H1 (cell line): ENCODE measurements at regions of chr13 and their contacts with region 1.

Region 1: GRCh38 chr13:100721885-100722512 is 47.4 kb upstream of the TMTC4 start:
- DNase-seq: peak in 1 of 2 experiments; percentile 82
- H3K4me3 ChIP-seq: no peak overlapping the region
- H3K27ac ChIP-seq: no peak overlapping the region
- H3K4me1 ChIP-seq: no peaks in the 10 kb centered on the region
- H3K27me3 ChIP-seq: no peaks in the 10 kb centered on the region; a peak in 1 of 7 replicates
- CTCF ChIP-seq: peak; percentile 60 to 80 (median 63)
- EP300 ChIP-seq: no peak
- POLR2A ChIP-seq: no peak
- RAD21 ChIP-seq: peak; percentile 69 to 76

Region 2: GRCh38 chr13:100707818-100708740 is 13.9 kb before region 1 on chr13:
- CTCF ChIA-PET with region 1: interaction called, 52 read pairs
- POLR2A ChIA-PET with region 1: no interaction called
- DNase-seq: no peak
- H3K4me3 ChIP-seq: no peak overlapping the region
- H3K27ac ChIP-seq: no peak overlapping the region
- H3K4me1 ChIP-seq: no peaks in the 10 kb centered on the region
- H3K27me3 ChIP-seq: no peaks in the 10 kb centered on the region
- CTCF ChIP-seq: no peak
- EP300 ChIP-seq: no peak
- POLR2A ChIP-seq: no peak
- RAD21 ChIP-seq: no peak

Region 3: DNA sequence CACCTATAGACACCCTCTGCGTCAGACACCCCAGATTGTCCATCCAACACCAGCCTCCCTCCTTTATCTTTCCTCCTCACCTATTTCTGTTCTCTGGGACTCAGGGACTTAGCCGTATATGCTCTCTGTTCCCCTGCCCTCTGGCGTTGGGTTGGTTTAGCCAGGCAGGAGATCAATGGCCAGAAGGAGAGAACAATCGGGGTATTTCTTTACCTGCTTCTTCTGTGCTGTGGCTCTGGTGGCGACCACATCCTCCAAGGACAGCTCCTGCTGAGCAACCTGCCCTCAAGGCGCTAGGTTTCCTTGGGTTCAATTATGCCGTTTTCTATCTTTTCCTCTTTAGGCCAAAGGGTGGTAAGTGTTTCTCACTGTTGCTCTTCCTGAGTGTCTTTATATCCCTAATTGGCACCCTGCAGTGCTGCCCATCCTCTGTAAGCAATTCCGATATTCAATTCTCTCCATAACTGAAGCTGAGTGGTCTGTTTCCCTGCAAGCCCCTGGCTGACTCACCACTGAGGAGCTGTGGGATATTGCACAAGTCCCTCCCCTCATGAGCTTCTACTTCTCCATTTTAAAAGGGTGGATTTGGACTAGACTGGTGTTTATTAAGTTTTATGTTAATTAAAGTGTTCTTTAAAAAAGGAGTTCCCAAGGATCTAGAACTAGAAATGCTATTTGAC is 16.3 kb after region 1 on chr13:
- CTCF ChIA-PET with region 1: interaction called, 61 read pairs
- POLR2A ChIA-PET with region 1: no interaction called
- DNase-seq: peak in 1 of 2 experiments; percentile 10
- H3K4me3 ChIP-seq: no peak overlapping the region
- H3K27ac ChIP-seq: no peak overlapping the region
- H3K4me1 ChIP-seq: no peaks in the 10 kb centered on the region
- H3K27me3 ChIP-seq: no peaks in the 10 kb centered on the region
- CTCF ChIP-seq: no peak
- EP300 ChIP-seq: no peak
- POLR2A ChIP-seq: no peak
- RAD21 ChIP-seq: no peak

Region 4: DNA sequence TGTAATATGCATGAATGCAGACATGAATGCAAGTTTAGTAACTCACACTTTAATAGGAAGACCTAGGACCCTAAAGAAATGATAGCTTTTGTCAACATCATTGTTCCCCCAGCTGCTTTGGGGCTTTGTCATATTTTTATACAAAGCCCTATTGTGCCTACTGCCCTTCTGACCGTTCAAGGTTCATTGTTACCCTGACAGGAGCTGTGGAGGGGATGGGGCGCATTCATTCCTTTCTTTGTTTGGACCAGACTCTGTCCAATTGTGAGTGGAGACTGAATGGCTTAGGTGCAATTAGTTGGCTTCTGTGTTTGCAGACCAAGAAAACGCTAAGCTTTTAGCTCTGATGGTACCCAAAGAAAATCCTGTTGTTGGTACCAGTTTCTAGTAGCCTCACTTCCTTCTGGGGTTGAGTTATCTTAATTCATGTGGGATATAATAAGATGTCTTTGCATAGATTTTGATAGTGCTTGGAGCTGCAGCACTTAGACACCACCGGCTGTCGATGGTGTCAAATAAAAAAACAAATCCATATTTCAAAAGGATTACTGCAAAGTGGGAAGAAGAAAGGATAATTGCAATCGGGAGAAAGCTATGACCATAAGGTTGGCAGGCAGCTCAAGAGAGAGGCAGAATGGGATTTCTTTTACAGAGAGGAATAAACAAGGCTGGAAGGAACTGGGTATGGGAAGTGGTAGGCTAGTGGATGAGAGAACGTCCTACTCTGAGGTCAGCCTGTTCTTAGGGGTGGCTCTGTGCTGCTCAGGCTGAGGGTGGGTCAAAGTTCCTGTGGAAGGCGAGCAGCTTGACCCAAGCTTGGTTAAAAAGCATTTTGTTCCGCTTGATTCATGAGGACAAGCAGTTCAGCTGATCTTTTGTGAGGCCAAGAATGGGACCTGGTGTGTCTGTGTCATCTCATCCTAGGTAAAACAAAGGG is 86.6 kb after region 1 on chr13:
- CTCF ChIA-PET with region 1: interaction called, 11 read pairs
- POLR2A ChIA-PET with region 1: no interaction called
- DNase-seq: no peak
- H3K4me3 ChIP-seq: no peak overlapping the region
- H3K27ac ChIP-seq: no peak overlapping the region
- H3K4me1 ChIP-seq: 0 out of 7 replicates have a peak, but pooled peaks cover 0 to 2% (median 0%) of the 10 kb centered on the region in 4 experiments
- H3K27me3 ChIP-seq: no peaks in the 10 kb centered on the region
- CTCF ChIP-seq: no peak
- EP300 ChIP-seq: no peak
- POLR2A ChIP-seq: no peak
- RAD21 ChIP-seq: no peak

Region 5: DNA sequence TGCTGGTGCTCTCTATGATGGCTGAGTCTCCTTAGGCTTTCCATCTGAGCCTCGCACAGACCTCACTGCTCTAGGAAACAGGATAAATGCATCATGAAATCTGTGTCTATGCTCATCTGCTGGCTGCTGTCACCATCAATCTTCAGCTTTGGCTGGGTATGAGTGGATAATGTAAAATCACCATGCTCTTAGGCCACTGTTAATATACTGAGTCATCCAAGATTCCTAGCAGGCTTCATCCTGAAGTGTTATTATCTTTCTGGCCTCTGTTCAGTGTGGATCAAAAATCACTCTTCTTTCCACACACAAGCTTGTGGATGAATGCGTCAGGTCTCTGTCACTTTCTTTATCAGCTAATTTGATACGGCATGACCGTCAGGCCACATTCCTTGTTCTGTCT is 376.9 kb after region 1 on chr13:
- CTCF ChIA-PET with region 1: interaction called, 10 read pairs
- POLR2A ChIA-PET with region 1: no interaction called
- DNase-seq: no peak
- H3K4me3 ChIP-seq: no peak overlapping the region
- H3K27ac ChIP-seq: no peak overlapping the region
- H3K4me1 ChIP-seq: no peaks in the 10 kb centered on the region
- H3K27me3 ChIP-seq: no peaks in the 10 kb centered on the region
- CTCF ChIP-seq: no peak
- EP300 ChIP-seq: no peak
- POLR2A ChIP-seq: no peak
- RAD21 ChIP-seq: no peak

Region 6: DNA sequence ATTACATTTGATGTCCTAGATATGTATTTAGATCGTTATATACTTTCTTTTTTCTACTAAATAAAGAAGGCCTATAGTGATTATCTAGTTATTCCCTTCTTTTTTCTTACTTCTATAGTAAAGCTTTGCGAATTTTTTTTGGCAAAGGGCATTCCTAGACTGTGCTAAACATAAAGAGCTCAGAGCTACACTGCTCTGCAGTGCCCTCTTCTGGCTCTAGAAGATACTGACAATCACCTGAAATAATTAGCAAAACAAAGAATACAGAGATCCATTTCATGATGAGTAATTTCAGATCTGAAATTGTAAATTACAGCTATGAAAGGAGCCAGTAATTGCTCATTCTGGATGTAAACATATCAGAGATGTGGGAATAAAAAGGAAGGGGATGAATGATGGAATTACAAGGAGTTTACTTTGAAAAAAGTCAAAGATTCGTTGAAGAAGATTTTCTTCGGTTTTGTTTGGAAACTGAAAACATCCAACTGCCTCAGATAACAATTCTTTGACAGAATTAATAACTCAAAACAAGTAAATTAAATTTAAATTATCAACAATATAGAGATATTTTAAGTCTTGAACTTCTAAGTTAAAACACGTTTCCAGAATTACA is 405.8 kb after region 1 on chr13:
- CTCF ChIA-PET with region 1: interaction called, 22 read pairs
- POLR2A ChIA-PET with region 1: no interaction called
- DNase-seq: no peak
- H3K4me3 ChIP-seq: no peak overlapping the region
- H3K27ac ChIP-seq: no peak overlapping the region
- H3K4me1 ChIP-seq: no peaks in the 10 kb centered on the region
- H3K27me3 ChIP-seq: no peaks in the 10 kb centered on the region
- CTCF ChIP-seq: peak in 2 of 3 experiments; percentile 53 to 67; a peak in 2 of 4 replicates
- EP300 ChIP-seq: no peak
- POLR2A ChIP-seq: no peak
- RAD21 ChIP-seq: peak; percentile 71 to 74